Stomach (tissue), 19 donors: ENCODE measurements at regions of chr11 and their contacts with region 1.

Region 1: DNA sequence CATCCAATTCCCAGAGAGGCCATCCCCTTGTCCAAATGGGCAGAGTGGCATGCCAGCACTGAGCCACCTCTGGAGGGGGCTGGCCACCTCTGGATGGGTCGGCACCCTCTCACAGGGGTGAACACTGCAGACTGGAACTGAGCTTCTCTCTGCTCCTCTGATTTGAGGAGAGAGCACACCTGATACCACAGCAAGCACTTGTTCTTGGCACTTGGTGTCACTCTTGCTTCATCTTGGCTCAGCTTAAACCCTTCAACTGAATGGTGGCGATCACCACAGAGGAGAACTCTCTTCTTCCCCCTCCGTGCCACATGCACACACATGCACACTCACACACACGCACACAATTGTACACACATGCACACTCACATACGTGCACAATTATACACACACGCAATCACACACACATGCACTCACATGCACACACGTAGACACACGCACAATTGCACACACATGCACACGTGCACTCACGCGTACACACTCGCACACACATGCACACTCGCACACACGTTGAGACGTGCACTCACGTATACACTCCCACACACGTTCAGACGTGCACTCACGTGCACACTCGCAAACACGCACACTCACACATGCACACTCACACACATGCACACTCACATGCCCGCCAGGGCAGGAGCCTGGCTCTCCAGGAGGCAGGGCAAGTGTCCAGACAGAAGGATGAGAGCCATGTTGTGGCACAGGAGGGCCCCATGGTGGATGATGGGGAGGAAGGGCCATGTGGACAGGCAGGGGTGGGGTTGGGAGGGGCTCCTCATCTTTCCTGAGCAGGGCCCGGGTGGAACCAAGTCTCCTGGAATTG is 23.4 kb downstream of the OVOL1 start:
- DNase-seq: no peak
- H3K4me3 ChIP-seq: no peak overlapping the region
- H3K27ac ChIP-seq: no peak overlapping the region
- H3K4me1 ChIP-seq: peaks cover 0 to 14% (median 12%) of the 10 kb centered on the region in 4 donors
- H3K27me3 ChIP-seq: peaks cover 0 to 28% (median 14%) of the 10 kb centered on the region in 3 donors
- CTCF ChIP-seq: no peak
- EP300 ChIP-seq: no peak
- POLR2A ChIP-seq: no peak

Region 2: GRCh38 chr11:65779851-65780577 is 30.2 kb before region 1 on chr11:
- intact Hi-C with region 1: loop called (anchors 5 kb)
- DNase-seq: peak; percentile 86 to 93
- H3K4me3 ChIP-seq: peak overlapping the region; percentile 78 to 97 (median 96)
- H3K27ac ChIP-seq: peak overlapping the region; percentile 65 to 93 (median 89)
- H3K4me1 ChIP-seq: peaks cover 22 to 54% (median 46%) of the 10 kb centered on the region in 4 donors
- H3K27me3 ChIP-seq: peaks cover 0 to 3% (median 0%) of the 10 kb centered on the region in 3 donors
- CTCF ChIP-seq: peak in 5 of 7 experiments; percentile 81 to 98 (median 94)
- EP300 ChIP-seq: no peak
- POLR2A ChIP-seq: no peak